ENCODE measurements at regions of chr9 and their contacts with region 1.

Region 1: GRCh38 chr9:37592108-37592951 is at the start of gene TOMM5:
- DNase-seq: peak; percentile 90 to 93 (median 92)
- H3K4me3 ChIP-seq: peak within 1 kb of the TSS; percentile 92 to 100
- H3K4me3 Mint-ChIP-seq: peak within 1 kb of the TSS; percentile 97 to 100 (median 98)
- H3K27ac ChIP-seq: peak within 1 kb of the TSS; percentile 79
- H3K27ac Mint-ChIP-seq: peak within 1 kb of the TSS; percentile 96 to 99 (median 98)
- H3K4me1 ChIP-seq: peaks cover 39% of the 10 kb centered on the region
- H3K4me1 Mint-ChIP-seq: peaks cover 22 to 50% (median 36%) of the 10 kb centered on the region in 4 donors
- H3K27me3 ChIP-seq: no peaks in the 10 kb centered on the region
- H3K27me3 Mint-ChIP-seq: peaks cover 3 to 10% of the 10 kb centered on the region in 2 donors
- total RNA-seq, gene TOMM5: 48.2 to 51.1 TPM

Region 2: GRCh38 chr9:37415011-37415719 is 177.2 kb before region 1 on chr9:
- CTCF ChIA-PET with region 1: interaction called, 6 read pairs
- POLR2A ChIA-PET with region 1: interaction called, 4 read pairs
- intact Hi-C with region 1: loop called (anchors 1 kb)
- DNase-seq: peak; percentile 65 to 77 (median 71)
- H3K4me3 ChIP-seq: no peak overlapping the region
- H3K4me3 Mint-ChIP-seq: peak overlapping the region in 4 of 8 donors; percentile 48 to 80 (median 66)
- H3K27ac ChIP-seq: no peak overlapping the region
- H3K27ac Mint-ChIP-seq: peak overlapping the region in 6 of 7 donors; percentile 68 to 90 (median 86)
- H3K4me1 ChIP-seq: peaks cover 11% of the 10 kb centered on the region
- H3K4me1 Mint-ChIP-seq: peaks cover 9 to 17% (median 13%) of the 10 kb centered on the region in 4 donors
- H3K27me3 ChIP-seq: no peaks in the 10 kb centered on the region
- H3K27me3 Mint-ChIP-seq: peaks cover 4 to 5% of the 10 kb centered on the region in 2 donors

Region 3: GRCh38 chr9:37528652-37529510 is 63.4 kb before region 1 on chr9:
- CTCF ChIA-PET with region 1: interaction called, 3 read pairs
- POLR2A ChIA-PET with region 1: interaction called, 9 read pairs
- intact Hi-C with region 1: loop called (anchors 2 kb)
- DNase-seq: peak; percentile 82 to 90 (median 87)
- H3K4me3 ChIP-seq: peak overlapping the region; percentile 19 to 37
- H3K4me3 Mint-ChIP-seq: peak overlapping the region; percentile 75 to 92 (median 84)
- H3K27ac ChIP-seq: peak overlapping the region; percentile 70
- H3K27ac Mint-ChIP-seq: peak overlapping the region; percentile 91 to 99 (median 99)
- H3K4me1 ChIP-seq: peaks cover 31% of the 10 kb centered on the region
- H3K4me1 Mint-ChIP-seq: peaks cover 15 to 36% (median 25%) of the 10 kb centered on the region in 4 donors
- H3K27me3 ChIP-seq: no peaks in the 10 kb centered on the region
- H3K27me3 Mint-ChIP-seq: no peaks in the 10 kb centered on the region

Region 4: DNA sequence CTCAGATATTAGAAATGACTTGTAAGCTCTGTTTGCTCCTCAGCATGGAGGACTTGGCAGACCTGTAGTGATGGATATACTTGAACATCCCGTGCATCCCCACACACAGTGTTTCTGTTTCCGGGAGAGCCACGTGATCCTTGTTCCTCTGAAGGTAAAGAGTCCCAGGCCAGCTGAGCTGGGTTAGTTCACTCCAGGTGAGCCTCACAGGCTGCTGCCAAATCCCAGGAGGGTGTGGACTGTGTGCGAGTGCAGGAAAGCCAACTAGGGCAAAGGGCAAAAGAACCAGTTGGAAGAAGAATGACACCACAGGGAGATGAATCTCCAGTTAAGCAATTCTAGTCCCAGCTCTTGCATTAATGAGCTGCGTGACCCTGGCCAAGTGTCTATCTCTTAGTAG is 10.5 kb after region 1 on chr9:
- CTCF ChIA-PET with region 1: no interaction called
- POLR2A ChIA-PET with region 1: no interaction called
- intact Hi-C with region 1: no loop called
- DNase-seq: no peak
- H3K4me3 ChIP-seq: no peak overlapping the region
- H3K4me3 Mint-ChIP-seq: no peak overlapping the region
- H3K27ac ChIP-seq: no peak overlapping the region
- H3K27ac Mint-ChIP-seq: no peak overlapping the region
- H3K4me1 ChIP-seq: no peaks in the 10 kb centered on the region
- H3K4me1 Mint-ChIP-seq: no peaks in the 10 kb centered on the region
- H3K27me3 ChIP-seq: peaks cover 5% of the 10 kb centered on the region
- H3K27me3 Mint-ChIP-seq: peaks cover 11 to 25% of the 10 kb centered on the region in 2 donors

Region 5: DNA sequence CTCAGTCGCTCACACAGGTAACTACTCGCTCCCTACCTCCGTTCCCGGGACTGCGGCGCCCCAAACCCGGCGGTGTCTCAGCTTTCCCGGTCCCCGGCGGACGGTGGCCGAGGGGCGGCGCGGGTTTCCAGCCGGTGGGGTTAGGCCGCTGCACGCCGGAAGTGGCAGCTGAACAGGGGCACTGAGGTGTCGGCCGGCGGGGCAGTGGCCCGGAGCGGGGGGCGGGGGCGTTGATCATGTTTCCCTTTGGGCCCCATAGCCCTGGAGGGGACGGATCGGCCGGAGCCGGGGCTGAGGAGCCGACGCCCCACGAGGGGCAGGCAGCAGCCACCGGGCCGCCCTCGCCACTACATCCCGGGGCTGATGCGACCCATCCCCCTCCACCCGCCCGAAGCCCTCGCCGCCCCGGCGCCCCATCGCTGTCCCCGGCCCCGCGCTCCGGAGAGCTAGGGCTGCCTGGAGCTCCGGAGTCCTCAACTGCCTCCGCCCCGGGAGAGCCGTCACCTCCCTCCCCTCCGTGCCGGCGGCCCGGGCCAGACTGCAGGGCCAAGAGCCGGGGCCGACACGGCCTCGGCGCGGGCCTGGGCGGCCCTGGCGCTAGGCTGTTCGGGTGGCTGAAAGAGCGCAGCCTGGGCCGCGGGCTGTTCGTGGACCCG is 208.4 kb after region 1 on chr9 and contains the start of gene DCAF10:
- CTCF ChIA-PET with region 1: interaction called, 3 read pairs
- POLR2A ChIA-PET with region 1: no interaction called
- intact Hi-C with region 1: loop called (anchors 1 kb)
- DNase-seq: peak; percentile 83 to 91 (median 86)
- H3K4me3 ChIP-seq: peak within 1 kb of the TSS; percentile 76 to 98
- H3K4me3 Mint-ChIP-seq: peak within 1 kb of the TSS; percentile 91 to 96 (median 94)
- H3K27ac ChIP-seq: peak within 1 kb of the TSS; percentile 70
- H3K27ac Mint-ChIP-seq: peak within 1 kb of the TSS; percentile 87 to 97 (median 92)
- H3K4me1 ChIP-seq: peaks cover 35% of the 10 kb centered on the region
- H3K4me1 Mint-ChIP-seq: peaks cover 23 to 48% (median 33%) of the 10 kb centered on the region in 4 donors
- H3K27me3 ChIP-seq: no peaks in the 10 kb centered on the region
- H3K27me3 Mint-ChIP-seq: no peaks in the 10 kb centered on the region
- total RNA-seq, gene DCAF10: 20.3 to 21.7 TPM

Region 6: DNA sequence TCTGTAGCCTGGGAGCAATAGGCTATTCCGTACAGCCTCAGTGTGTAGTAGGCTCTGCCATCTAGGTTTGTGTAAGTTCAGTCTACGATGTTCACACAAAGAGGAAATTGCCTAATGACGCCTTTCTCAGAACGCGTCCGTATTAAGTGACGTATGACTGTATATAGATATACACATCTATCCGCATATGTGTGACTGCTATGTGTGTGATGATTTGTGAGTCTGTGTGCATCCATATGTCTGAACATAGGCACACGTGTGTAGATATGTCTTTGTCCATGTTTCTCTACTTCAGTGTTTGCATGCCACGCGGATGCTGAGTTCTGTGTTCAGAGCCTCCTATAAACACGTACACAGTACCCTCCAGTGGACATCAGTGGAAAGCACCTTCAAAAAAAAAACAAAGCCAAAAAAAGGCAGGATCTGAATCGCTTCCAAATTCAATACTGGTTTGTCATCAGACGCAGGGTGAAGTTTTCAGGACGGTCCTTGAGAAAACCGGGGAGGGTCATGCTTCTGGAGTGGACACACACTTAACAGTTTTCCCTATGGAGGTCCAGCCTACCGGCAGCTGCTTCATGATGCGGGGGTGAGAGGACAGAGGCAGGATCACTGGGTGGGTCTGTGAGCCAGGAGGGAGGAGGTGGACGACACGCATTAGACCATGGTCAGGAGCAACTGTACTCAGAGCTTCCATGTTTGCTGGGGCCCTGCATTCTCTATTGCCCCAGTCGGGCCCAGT is 770.7 kb after region 1 on chr9:
- CTCF ChIA-PET with region 1: no interaction called
- POLR2A ChIA-PET with region 1: no interaction called
- intact Hi-C with region 1: no loop called
- DNase-seq: peak in 4 of 5 donors; percentile 15 to 30 (median 24)
- H3K4me3 ChIP-seq: no peak overlapping the region
- H3K4me3 Mint-ChIP-seq: peak overlapping the region in 7 of 8 donors; percentile 41 to 73 (median 66)
- H3K27ac ChIP-seq: no peak overlapping the region
- H3K27ac Mint-ChIP-seq: peak overlapping the region in 4 of 7 donors; percentile 10 to 53 (median 48)
- H3K4me1 ChIP-seq: no peaks in the 10 kb centered on the region
- H3K4me1 Mint-ChIP-seq: peaks cover 2 to 6% (median 4%) of the 10 kb centered on the region in 4 donors
- H3K27me3 ChIP-seq: no peaks in the 10 kb centered on the region
- H3K27me3 Mint-ChIP-seq: peaks cover 1 to 4% of the 10 kb centered on the region in 2 donors